ENCODE measurements at regions of chr22 and their contacts with region 1.

Region 1: GRCh38 chr22:39532215-39533071 is at the start of gene RPS19BP1:
- DNase-seq: peak; percentile 98 to 100 (median 99)
- ATAC-seq: peak; percentile 84
- H3K4me3 ChIP-seq: peak within 1 kb of the TSS; percentile 83 to 99
- H3K4me3 Mint-ChIP-seq: peak within 1 kb of the TSS; percentile 97
- H3K27ac ChIP-seq: peak within 1 kb of the TSS; percentile 78 to 97
- H3K27ac Mint-ChIP-seq: peak within 1 kb of the TSS; percentile 95
- H3K4me1 ChIP-seq: peaks cover 55% of the 10 kb centered on the region
- H3K4me1 Mint-ChIP-seq: peaks cover 56% of the 10 kb centered on the region
- H3K27me3 ChIP-seq: no peaks in the 10 kb centered on the region
- H3K27me3 Mint-ChIP-seq: no peaks in the 10 kb centered on the region
- CTCF ChIP-seq: no peak
- total RNA-seq, gene RPS19BP1: 69.0 to 70.5 TPM

Region 2: DNA sequence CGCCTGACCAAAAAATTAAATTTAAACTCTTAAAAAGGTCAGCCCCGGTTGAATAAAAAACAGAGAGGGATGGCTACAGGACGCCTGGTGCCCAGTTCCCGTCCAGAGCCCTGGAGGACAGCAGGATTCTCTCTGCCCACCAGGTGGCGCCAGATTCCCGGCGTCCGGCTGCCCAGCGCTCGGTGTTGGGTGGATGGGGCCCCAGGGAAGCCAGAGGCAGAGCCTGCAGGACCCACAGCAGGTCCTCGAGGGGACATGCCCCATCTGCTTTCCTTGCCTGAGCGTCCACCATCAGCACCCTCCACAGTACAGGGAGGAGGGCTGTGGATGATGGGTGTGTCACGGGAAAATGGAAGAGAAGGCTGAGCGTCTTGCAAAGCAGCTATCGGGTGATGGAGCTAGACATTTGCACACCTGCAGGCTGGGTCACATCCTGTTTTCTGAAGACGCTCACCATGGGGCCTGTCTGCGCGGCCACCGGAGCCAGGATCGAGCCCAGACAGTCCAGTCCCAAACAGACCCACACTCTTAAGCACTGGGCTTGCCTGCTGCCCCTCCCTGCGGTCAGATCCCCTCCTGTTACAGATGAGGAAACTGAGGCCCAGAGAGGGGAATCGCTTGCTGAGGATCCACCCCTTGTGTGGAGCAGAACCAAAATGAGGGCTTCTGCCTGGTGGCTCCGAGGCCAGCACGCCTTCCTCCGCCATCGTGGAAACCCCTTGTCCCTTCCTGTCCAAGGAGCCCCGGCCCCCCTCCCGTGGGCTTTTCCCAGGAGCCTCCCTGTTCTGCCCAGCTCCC is 361.4 kb before region 1 on chr22:
- CTCF ChIA-PET with region 1: interaction called, 7 read pairs
- POLR2A ChIA-PET with region 1: no interaction called
- intact Hi-C with region 1: loop called in 1 of 2 experiments (anchors 5 kb)
- DNase-seq: peak; percentile 73 to 95 (median 85)
- ATAC-seq: peak; percentile 57
- H3K4me3 ChIP-seq: peak overlapping the region; percentile 26 to 28
- H3K4me3 Mint-ChIP-seq: peak overlapping the region; percentile 54
- H3K27ac ChIP-seq: peak overlapping the region; percentile 25 to 42
- H3K27ac Mint-ChIP-seq: peak overlapping the region; percentile 94
- H3K4me1 ChIP-seq: peaks cover 49% of the 10 kb centered on the region
- H3K4me1 Mint-ChIP-seq: peaks cover 47% of the 10 kb centered on the region
- H3K27me3 ChIP-seq: peaks cover 0 to 3% of the 10 kb centered on the region in 2 experiments
- H3K27me3 Mint-ChIP-seq: no peaks in the 10 kb centered on the region
- CTCF ChIP-seq: peak; percentile 98

Region 3: GRCh38 chr22:39490135-39490798 is 42.2 kb before region 1 on chr22:
- CTCF ChIA-PET with region 1: interaction called, 287 read pairs
- POLR2A ChIA-PET with region 1: interaction called, 13 read pairs
- intact Hi-C with region 1: loop called (anchors 1 kb)
- DNase-seq: peak; percentile 58 to 89 (median 76)
- ATAC-seq: peak; percentile 99
- H3K4me3 ChIP-seq: no peak overlapping the region
- H3K4me3 Mint-ChIP-seq: peak overlapping the region; percentile 69
- H3K27ac ChIP-seq: no peak overlapping the region
- H3K27ac Mint-ChIP-seq: peak overlapping the region; percentile 67
- H3K4me1 ChIP-seq: peaks cover 7% of the 10 kb centered on the region
- H3K4me1 Mint-ChIP-seq: peaks cover 12% of the 10 kb centered on the region
- H3K27me3 ChIP-seq: no peaks in the 10 kb centered on the region
- H3K27me3 Mint-ChIP-seq: no peaks in the 10 kb centered on the region
- CTCF ChIP-seq: no peak

Region 4: GRCh38 chr22:39545386-39546365 is 13.2 kb after region 1 on chr22:
- CTCF ChIA-PET with region 1: interaction called, 16 read pairs
- POLR2A ChIA-PET with region 1: no interaction called
- intact Hi-C with region 1: no loop called
- DNase-seq: peak; percentile 48 to 83 (median 75)
- ATAC-seq: peak; percentile 79
- H3K4me3 ChIP-seq: peak overlapping the region in 1 of 2 experiments; percentile 22
- H3K4me3 Mint-ChIP-seq: no peak overlapping the region
- H3K27ac ChIP-seq: peak overlapping the region in 1 of 2 experiments; percentile 45
- H3K27ac Mint-ChIP-seq: no peak overlapping the region
- H3K4me1 ChIP-seq: peaks cover 13% of the 10 kb centered on the region
- H3K4me1 Mint-ChIP-seq: peaks cover 14% of the 10 kb centered on the region
- H3K27me3 ChIP-seq: peaks cover 3% of the 10 kb centered on the region in 2 experiments
- H3K27me3 Mint-ChIP-seq: peaks cover 37% of the 10 kb centered on the region
- CTCF ChIP-seq: no peak

Region 5: GRCh38 chr22:39610246-39610645 is 77.8 kb after region 1 on chr22:
- CTCF ChIA-PET with region 1: no interaction called
- POLR2A ChIA-PET with region 1: no interaction called
- intact Hi-C with region 1: no loop called
- DNase-seq: no peak
- ATAC-seq: no peak
- H3K4me3 ChIP-seq: no peak overlapping the region
- H3K4me3 Mint-ChIP-seq: no peak overlapping the region
- H3K27ac ChIP-seq: no peak overlapping the region
- H3K27ac Mint-ChIP-seq: no peak overlapping the region
- H3K4me1 ChIP-seq: peaks cover 15% of the 10 kb centered on the region
- H3K4me1 Mint-ChIP-seq: peaks cover 17% of the 10 kb centered on the region
- H3K27me3 ChIP-seq: no peaks in the 10 kb centered on the region
- H3K27me3 Mint-ChIP-seq: no peaks in the 10 kb centered on the region
- CTCF ChIP-seq: no peak

Region 6: GRCh38 chr22:39940757-39941305 is 408.4 kb after region 1 on chr22:
- CTCF ChIA-PET with region 1: interaction called, 10 read pairs
- POLR2A ChIA-PET with region 1: interaction called, 5 read pairs
- intact Hi-C with region 1: loop called (anchors 2 kb)
- DNase-seq: peak in 2 of 9 experiments; percentile 78 to 87
- ATAC-seq: peak; percentile 49
- H3K4me3 ChIP-seq: peak overlapping the region in 1 of 2 experiments; percentile 40
- H3K4me3 Mint-ChIP-seq: peak overlapping the region; percentile 56
- H3K27ac ChIP-seq: peak overlapping the region; percentile 22 to 76
- H3K27ac Mint-ChIP-seq: no peak overlapping the region
- H3K4me1 ChIP-seq: peaks cover 98% of the 10 kb centered on the region
- H3K4me1 Mint-ChIP-seq: peaks cover 92% of the 10 kb centered on the region
- H3K27me3 ChIP-seq: no peaks in the 10 kb centered on the region
- H3K27me3 Mint-ChIP-seq: no peaks in the 10 kb centered on the region
- CTCF ChIP-seq: peak; percentile 62

Region 7: DNA sequence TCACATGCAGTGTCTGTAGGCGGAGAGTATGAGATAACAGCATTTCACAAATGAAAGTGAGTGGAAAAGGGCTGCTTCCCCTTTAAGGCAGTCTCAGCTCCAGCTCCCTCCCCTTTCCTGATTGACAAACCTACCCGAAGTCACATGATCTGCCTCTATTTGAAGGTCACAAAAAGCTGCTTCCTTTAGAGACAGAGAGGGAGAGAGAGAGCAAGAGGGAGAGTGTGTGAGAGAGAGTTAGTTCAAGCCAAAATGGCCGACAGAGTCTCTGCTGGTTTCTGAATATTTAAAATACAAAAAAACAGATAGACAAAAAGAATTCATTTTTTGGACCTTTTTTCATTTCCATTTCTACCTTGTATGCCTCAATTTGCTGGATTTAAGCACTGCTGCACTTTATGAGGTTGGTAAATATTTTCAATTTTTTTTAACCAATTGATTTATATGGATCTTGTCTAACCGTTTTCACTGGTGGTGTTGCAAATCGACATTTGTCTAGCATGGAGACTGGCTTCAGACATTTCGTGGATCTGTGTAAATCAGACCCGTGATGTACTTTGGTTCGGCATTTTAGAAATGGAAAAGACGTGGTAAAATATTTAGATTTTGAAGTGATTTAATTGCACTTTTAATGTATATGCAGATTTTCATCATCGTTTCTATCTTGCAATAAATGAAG is 645.4 kb after region 1 on chr22 and contains the start of gene TNRC6B:
- CTCF ChIA-PET with region 1: interaction called, 3 read pairs
- POLR2A ChIA-PET with region 1: no interaction called
- intact Hi-C with region 1: loop called (anchors 5 to 10 kb)
- DNase-seq: peak; percentile 35 to 96 (median 74)
- ATAC-seq: peak; percentile 76
- H3K4me3 ChIP-seq: peak within 1 kb of the TSS; percentile 59 to 71
- H3K4me3 Mint-ChIP-seq: peak within 1 kb of the TSS; percentile 82
- H3K27ac ChIP-seq: peak within 1 kb of the TSS; percentile 60 to 71
- H3K27ac Mint-ChIP-seq: peak within 1 kb of the TSS; percentile 83
- H3K4me1 ChIP-seq: peaks cover 51% of the 10 kb centered on the region
- H3K4me1 Mint-ChIP-seq: peaks cover 60% of the 10 kb centered on the region
- H3K27me3 ChIP-seq: no peaks in the 10 kb centered on the region
- H3K27me3 Mint-ChIP-seq: no peaks in the 10 kb centered on the region
- CTCF ChIP-seq: no peak
- total RNA-seq, gene TNRC6B: 85.3 to 106 TPM

Measured in CD8-positive, alpha-beta T cell (primary cell).